AG04449 (cell line): ENCODE measurements at regions of chr9 and their contacts with region 1.

Region 1: DNA sequence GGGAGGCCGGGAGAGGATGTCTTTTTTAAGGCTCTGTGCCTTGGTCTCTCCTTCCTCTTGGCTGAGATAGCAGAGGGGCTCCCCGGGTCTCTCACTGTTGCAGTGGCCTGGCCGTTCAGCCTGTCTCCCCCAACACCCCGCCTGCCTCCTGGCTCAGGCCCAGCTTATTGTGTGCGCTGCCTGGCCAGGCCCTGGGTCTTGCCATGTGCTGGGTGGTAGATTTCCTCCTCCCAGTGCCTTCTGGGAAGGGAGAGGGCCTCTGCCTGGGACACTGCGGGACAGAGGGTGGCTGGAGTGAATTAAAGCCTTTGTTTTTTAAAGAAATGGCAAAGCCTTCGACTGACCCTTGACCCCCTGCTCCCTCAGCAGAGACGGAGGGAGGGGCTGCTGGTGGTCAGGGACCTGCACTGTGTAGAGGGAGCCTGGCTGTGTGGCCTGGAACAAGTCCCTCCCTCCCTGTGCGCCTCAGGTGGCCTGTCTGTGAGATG is 11.1 kb downstream of the FPGS start:
- DNase-seq: no peak
- H3K4me3 ChIP-seq: no peak overlapping the region
- CTCF ChIP-seq: no peak

Region 2: GRCh38 chr9:127802576-127803443 is 11.0 kb before region 1 on chr9 and contains the start of gene FPGS:
- CTCF ChIA-PET with region 1: interaction called, 6 read pairs
- POLR2A ChIA-PET with region 1: interaction called, 11 read pairs
- DNase-seq: peak; percentile 36
- H3K4me3 ChIP-seq: peak within 1 kb of the TSS; percentile 81
- CTCF ChIP-seq: no peak

Region 3: DNA sequence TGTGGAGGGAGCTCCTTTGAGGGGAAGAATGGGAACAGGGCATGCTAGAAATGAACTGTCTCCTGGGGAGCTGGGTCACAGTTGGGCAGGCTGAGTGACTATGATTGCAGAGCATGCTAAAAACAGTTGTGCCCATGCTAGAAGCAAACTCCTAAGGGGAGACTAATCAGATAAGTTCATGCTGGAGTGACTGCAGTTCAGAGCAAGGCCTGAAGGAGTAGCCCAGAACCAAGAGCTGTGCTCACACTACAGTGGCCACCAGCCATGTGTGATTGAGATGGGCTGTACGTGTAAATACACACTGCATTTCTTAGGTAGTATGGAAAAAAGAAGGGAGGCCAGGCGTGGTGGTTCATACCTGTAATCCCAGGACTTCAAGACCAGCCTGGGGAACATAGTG is 74.0 kb after region 1 on chr9:
- CTCF ChIA-PET with region 1: no interaction called
- POLR2A ChIA-PET with region 1: no interaction called
- DNase-seq: no peak
- H3K4me3 ChIP-seq: no peak overlapping the region
- CTCF ChIP-seq: no peak